ENCODE measurements at regions of chr18 and their contacts with region 1.

Region 1: DNA sequence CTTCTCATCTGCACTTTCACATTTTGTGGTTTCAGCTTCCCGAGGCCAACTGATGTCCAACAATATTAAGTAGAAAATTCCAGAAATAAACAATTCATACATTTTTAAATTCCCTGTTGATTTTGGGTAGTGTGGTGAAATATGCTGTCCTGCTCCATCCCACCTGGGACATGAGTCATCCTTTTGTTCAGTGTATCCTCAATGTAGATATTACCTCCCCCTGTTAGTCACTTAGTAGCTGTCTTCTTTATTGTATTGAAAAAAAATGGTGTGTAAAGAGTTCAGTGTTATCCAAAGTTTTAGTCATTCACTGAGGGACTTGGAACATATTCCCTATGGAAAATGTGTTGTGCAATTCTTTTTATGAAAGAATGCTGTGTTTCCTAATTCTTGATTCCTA is 348.1 kb downstream of the SOCS6 start:
- DNase-seq: no peak
- H3K4me3 ChIP-seq: no peak overlapping the region
- H3K27ac ChIP-seq: no peak overlapping the region
- H3K4me1 ChIP-seq: no peaks in the 10 kb centered on the region
- H3K27me3 ChIP-seq: no peaks in the 10 kb centered on the region
- CTCF ChIP-seq: no peak

Region 2: GRCh38 chr18:70693246-70693645 is 56.3 kb after region 1 on chr18:
- CTCF ChIA-PET with region 1: no interaction called
- POLR2A ChIA-PET with region 1: no interaction called
- intact Hi-C with region 1: loop called (anchors 10 kb)
- DNase-seq: peak; percentile 86
- H3K4me3 ChIP-seq: no peak overlapping the region
- H3K27ac ChIP-seq: peak overlapping the region; percentile 35
- H3K4me1 ChIP-seq: peaks cover 23% of the 10 kb centered on the region
- H3K27me3 ChIP-seq: no peaks in the 10 kb centered on the region
- CTCF ChIP-seq: no peak

Region 3: DNA sequence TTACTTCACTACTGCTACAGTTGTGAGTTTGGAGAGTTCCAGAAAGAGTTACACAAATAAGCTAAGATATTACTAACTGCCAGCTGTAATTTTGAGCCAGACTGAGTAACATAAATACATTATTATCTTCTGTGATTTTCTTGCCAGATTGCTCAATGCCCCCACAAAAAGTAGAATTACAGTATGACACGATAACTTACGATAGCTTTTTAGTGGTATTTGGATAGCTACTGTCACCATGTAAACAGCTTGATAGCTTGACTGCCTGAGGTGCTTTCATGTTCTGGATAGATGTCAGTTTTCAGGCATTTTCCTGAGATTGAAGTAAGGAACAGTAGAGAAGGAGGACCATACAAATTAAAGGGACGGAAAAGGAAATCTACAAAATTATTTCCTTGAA is 185.1 kb after region 1 on chr18:
- CTCF ChIA-PET with region 1: no interaction called
- POLR2A ChIA-PET with region 1: no interaction called
- intact Hi-C with region 1: no loop called
- DNase-seq: no peak
- H3K4me3 ChIP-seq: no peak overlapping the region
- H3K27ac ChIP-seq: no peak overlapping the region
- H3K4me1 ChIP-seq: no peaks in the 10 kb centered on the region
- H3K27me3 ChIP-seq: no peaks in the 10 kb centered on the region
- CTCF ChIP-seq: no peak

Region 4: GRCh38 chr18:70870292-70870691 is 233.3 kb after region 1 on chr18:
- CTCF ChIA-PET with region 1: no interaction called
- POLR2A ChIA-PET with region 1: no interaction called
- intact Hi-C with region 1: no loop called
- DNase-seq: no peak
- H3K4me3 ChIP-seq: no peak overlapping the region
- H3K27ac ChIP-seq: no peak overlapping the region
- H3K4me1 ChIP-seq: no peaks in the 10 kb centered on the region
- H3K27me3 ChIP-seq: no peaks in the 10 kb centered on the region
- CTCF ChIP-seq: no peak